Breast epithelium (tissue), 4 donors: ENCODE measurements at regions of chr4 and their contacts with region 1.

Region 1: DNA sequence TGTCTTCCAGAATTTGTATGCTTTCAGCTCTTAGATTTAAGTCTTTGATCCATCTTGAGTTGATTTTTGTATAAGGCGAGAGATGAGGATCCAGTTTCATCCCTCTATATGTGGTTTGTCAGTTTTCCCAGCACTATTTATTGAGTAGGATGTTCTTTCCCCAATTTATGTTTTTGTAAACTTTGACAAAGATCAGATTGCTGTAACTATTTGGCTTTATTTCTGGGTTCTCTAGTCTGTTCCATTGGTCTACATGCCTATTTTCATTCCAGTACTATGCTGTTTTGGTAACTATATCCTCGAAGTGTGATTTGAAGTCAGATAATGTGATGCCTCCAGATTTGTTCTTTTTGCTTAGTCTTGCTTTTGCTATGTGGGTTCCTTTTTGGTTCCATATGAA is 60.7 kb downstream of the IL15 start:
- DNase-seq: no peak
- H3K4me3 ChIP-seq: no peak overlapping the region
- H3K27ac ChIP-seq: no peak overlapping the region
- H3K4me1 ChIP-seq: no peaks in the 10 kb centered on the region
- H3K27me3 ChIP-seq: no peaks in the 10 kb centered on the region
- CTCF ChIP-seq: no peak
- POLR2A ChIP-seq: no peak

Region 2: DNA sequence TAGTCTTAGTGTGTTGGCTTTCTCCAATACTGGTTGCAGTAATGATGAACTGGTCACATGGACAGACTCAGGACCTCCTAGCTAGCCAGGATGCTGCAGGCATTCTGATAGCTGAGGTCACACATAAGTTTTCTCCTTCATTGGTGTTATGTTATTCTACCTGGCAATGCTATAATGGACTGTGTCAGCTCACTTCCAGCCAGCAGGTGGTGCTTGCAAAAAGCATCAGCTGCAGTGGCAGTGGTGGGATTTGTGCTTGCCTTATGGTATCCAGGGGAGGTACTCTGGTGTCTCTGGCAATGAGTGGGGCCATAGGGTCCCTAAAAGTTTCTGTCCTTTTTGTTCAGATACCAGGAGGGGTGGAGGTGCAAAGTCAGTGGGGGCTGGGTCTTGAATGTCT is 442.8 kb before region 1 on chr4:
- intact Hi-C with region 1: no loop called
- DNase-seq: no peak
- H3K4me3 ChIP-seq: no peak overlapping the region
- H3K27ac ChIP-seq: no peak overlapping the region
- H3K4me1 ChIP-seq: no peaks in the 10 kb centered on the region
- H3K27me3 ChIP-seq: no peaks in the 10 kb centered on the region
- CTCF ChIP-seq: no peak
- POLR2A ChIP-seq: no peak

Region 3: DNA sequence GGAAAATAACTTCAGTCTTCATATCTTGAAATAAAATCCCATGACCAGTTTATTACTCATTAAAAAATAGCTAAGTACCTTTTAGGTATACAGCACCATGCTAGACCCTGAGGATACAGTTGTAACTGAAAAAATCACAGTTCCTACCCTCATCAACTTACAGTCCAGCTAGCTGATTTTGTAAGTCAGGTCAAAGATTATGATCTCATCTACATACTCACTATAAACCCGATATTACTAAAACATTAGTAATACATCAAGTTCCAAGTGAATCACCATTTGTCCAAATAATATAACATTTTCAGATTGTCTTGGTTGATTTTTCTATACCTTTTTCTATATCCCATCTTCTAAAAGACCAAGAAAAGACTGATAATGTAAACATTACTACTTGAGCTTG is 815.0 kb after region 1 on chr4:
- intact Hi-C with region 1: loop called (anchors 5 kb)
- DNase-seq: no peak
- H3K4me3 ChIP-seq: no peak overlapping the region
- H3K27ac ChIP-seq: no peak overlapping the region
- H3K4me1 ChIP-seq: no peaks in the 10 kb centered on the region
- H3K27me3 ChIP-seq: no peaks in the 10 kb centered on the region
- CTCF ChIP-seq: no peak
- POLR2A ChIP-seq: no peak